Psoas muscle (tissue), 8 donors: ENCODE measurements at regions of chr10 and their contacts with region 1.

Region 1: GRCh38 chr10:122044045-122044661 is 55.2 kb downstream of the TACC2 start:
- DNase-seq: peak; percentile 48 to 69
- ATAC-seq: peak; percentile 89 to 92 (median 90)
- H3K4me3 ChIP-seq: peak overlapping the region; percentile 53
- H3K27ac ChIP-seq: peak overlapping the region; percentile 94
- H3K4me1 ChIP-seq: peaks cover 58% of the 10 kb centered on the region
- H3K27me3 ChIP-seq: no peaks in the 10 kb centered on the region
- CTCF ChIP-seq: no peak

Region 2: DNA sequence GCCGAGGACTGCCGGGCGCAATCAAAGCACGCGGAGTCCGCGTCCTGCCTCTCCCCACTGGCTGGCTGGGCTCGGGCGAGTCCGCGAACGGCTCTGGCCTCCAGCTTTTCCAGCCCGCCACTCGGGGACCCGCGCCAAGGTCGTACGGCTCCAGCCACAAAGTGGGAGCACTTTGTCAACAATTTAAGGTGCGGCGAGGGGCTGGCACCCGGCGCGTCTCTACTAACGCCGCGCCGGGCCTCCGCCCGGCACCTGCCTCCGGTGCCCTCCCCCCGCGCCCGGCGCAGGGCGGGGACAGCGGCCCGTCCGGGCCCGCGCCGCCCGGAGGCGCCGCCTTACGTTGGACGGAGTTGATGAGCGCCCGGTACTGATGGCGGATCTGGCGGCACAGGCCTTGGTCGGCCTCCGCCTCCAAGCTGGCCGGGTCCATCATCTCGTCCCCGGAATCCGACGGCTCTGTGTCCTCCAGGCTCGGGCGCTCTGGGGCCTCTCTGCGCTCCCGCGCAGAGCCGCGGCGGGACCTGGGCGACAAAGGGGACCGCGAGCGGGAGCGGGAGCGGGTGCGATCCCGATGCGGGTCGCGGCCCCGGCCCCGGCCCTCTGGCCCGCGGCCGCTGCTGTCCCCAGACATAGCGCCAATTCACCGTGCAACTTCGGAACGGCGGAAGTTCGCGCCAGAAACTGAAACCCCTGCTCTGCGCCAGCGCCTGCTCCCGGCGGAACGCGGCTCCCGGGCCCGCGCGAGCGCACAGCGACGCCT is 69.4 kb before region 1 on chr10 and contains the start of gene NSMCE4A:
- intact Hi-C with region 1: loop called in 1 of 2 experiments (anchors 5 kb)
- DNase-seq: peak; percentile 84 to 93
- ATAC-seq: peak; percentile 89 to 94 (median 90)
- H3K4me3 ChIP-seq: peak within 1 kb of the TSS; percentile 75
- H3K27ac ChIP-seq: peak within 1 kb of the TSS; percentile 89
- H3K4me1 ChIP-seq: peaks cover 14% of the 10 kb centered on the region
- H3K27me3 ChIP-seq: no peaks in the 10 kb centered on the region
- CTCF ChIP-seq: no peak
- total RNA-seq, gene NSMCE4A: 10.7 to 17.7 (median 14.6) TPM

Region 3: GRCh38 chr10:121994390-121994961 is 49.7 kb before region 1 on chr10:
- intact Hi-C with region 1: loop called (anchors 1 to 5 kb)
- DNase-seq: peak; percentile 52 to 87
- ATAC-seq: peak; percentile 68 to 81 (median 74)
- H3K4me3 ChIP-seq: peak overlapping the region; percentile 73
- H3K27ac ChIP-seq: peak overlapping the region; percentile 98
- H3K4me1 ChIP-seq: peaks cover 28% of the 10 kb centered on the region
- H3K27me3 ChIP-seq: no peaks in the 10 kb centered on the region
- CTCF ChIP-seq: peak; percentile 8